Dorsolateral prefrontal cortex (tissue), 120 donors: ENCODE measurements at regions of chr11 and their contacts with region 1.

Region 1: DNA sequence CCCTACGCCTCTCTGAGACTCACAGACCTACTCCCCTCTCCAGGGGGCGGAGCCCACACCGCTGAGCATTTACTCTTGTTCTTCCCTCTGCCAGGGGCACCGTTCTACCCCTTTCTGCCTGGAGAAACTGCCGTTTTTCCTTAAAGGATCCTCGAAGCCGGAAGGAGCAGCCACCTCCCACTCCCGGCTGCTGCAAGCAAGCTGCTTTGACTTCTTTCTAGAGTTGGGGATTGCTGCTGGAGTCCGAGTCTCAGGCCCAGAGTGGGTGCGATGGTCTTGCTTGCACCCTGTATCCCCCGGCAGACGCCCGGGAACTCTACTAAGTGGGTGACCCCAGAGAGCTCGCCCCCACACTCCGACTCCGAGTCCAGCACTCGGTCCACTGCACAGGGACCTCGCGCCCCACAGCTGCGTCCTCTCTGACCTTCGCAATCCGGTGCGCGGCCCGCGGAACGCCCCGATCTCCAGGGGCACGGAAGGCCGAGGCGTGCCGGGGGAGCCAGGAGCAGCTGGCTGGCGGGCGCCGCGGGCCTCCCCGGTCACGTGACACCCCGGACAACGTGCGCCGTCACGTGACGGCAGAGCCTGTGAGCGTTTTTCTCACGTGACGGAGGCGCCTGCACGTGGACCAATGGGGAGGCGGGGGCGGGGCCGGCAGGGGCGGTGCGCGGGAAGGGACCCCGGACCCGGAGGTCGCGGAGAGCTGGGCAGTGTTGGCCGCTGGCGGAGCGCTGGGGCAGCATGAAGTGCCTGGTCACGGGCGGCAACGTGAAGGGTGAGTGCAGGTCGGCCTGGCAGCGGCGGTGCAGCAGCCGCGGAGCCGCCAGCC is at the start of gene RAD9A:
- DNase-seq: peak; percentile 94 to 97 (median 95)
- H3K4me3 ChIP-seq: peak within 1 kb of the TSS; percentile 68 to 100 (median 88)
- H3K27ac ChIP-seq: peak within 1 kb of the TSS in 56 of 59 donors; percentile 9 to 92 (median 78)
- H3K27me3 ChIP-seq: no peaks in the 10 kb centered on the region
- CTCF ChIP-seq: peak in 20 of 56 donors; percentile 7 to 52 (median 24)
- total RNA-seq, gene RAD9A: 15.9 to 52.4 (median 26.4) TPM

Region 2: DNA sequence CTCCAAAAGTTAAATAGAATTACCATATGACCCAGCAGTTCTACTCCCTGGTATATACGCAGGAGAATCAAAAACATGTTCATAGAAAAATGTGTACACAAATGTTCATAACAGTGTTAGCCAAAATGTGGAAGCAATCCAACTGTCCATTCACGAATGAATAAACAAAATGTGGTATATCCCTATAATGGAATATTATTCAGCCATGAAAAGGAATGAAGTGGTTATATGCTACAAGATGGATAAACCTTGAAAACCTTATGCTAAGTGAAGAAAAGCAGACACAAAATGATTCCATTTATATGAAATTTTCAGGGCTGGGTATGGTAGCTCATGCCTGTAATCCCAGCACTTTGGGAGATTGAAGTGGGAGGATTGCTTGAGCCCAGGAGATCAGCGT is 54.3 kb before region 1 on chr11:
- intact Hi-C with region 1: no loop called
- DNase-seq: no peak
- H3K4me3 ChIP-seq: no peak overlapping the region
- H3K27ac ChIP-seq: no peak overlapping the region
- H3K27me3 ChIP-seq: no peaks in the 10 kb centered on the region
- CTCF ChIP-seq: no peak

Region 3: GRCh38 chr11:67428052-67428914 is 36.8 kb after region 1 on chr11 and contains the start of gene RPS6KB2:
- intact Hi-C with region 1: loop called (anchors 5 kb)
- DNase-seq: peak; percentile 97 to 100 (median 99)
- H3K4me3 ChIP-seq: peak within 1 kb of the TSS; percentile 55 to 99 (median 92)
- H3K27ac ChIP-seq: peak within 1 kb of the TSS; percentile 52 to 99 (median 95)
- H3K27me3 ChIP-seq: no peaks in the 10 kb centered on the region
- CTCF ChIP-seq: peak in 39 of 56 donors; percentile 9 to 63 (median 31)
- total RNA-seq, gene RPS6KB2: 13.4 to 47.4 (median 28.2) TPM

Region 4: DNA sequence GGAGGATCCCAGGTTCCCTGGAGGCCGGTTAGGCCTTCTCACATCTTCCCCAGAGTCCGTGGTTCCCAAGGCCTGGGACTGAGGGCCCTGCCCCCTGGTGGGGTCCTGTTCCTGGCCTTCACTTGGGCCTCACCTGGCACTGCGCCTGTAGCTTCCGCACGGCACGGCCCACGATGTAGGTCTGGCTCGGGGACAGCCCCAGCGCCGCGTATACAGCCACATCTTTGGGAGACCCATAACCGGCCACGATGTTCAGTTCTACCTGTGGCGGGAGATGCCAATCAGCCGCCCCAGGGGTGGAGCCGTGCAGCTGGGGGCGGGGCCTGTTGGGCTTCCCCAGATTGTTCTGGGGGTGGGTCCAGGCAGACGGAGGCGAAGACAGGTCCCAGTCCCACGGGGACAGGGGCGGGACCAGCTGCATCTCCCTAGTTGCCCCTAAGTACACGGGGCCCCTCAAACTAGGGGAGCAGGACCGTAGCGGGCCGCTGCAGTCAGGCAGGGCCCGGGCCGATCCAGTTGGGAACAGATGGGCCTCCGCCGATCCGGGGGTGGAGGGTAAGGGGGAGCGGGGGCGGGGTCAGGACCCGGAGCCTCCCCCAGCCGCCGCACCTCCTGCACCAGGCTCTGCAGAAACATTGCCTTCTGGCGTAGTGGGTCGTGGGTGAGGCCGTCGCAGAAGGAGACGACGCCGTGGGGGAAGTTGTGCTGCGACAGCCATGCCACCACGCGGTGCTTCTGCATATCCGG is 101.5 kb after region 1 on chr11:
- intact Hi-C with region 1: no loop called
- DNase-seq: no peak
- H3K4me3 ChIP-seq: no peak overlapping the region
- H3K27ac ChIP-seq: peak overlapping the region in 3 of 59 donors; percentile 18 to 65 (median 39)
- H3K27me3 ChIP-seq: no peaks in the 10 kb centered on the region
- CTCF ChIP-seq: no peak